Breast epithelium (tissue), 4 donors: ENCODE measurements at regions of chr2 and their contacts with region 1.

Region 1: GRCh38 chr2:143823876-143824275 is 694.7 kb downstream of the ARHGAP15 start:
- DNase-seq: no peak
- H3K4me3 ChIP-seq: no peak overlapping the region
- H3K27ac ChIP-seq: no peak overlapping the region
- H3K4me1 ChIP-seq: no peaks in the 10 kb centered on the region
- H3K27me3 ChIP-seq: no peaks in the 10 kb centered on the region
- CTCF ChIP-seq: no peak
- POLR2A ChIP-seq: no peak

Region 2: DNA sequence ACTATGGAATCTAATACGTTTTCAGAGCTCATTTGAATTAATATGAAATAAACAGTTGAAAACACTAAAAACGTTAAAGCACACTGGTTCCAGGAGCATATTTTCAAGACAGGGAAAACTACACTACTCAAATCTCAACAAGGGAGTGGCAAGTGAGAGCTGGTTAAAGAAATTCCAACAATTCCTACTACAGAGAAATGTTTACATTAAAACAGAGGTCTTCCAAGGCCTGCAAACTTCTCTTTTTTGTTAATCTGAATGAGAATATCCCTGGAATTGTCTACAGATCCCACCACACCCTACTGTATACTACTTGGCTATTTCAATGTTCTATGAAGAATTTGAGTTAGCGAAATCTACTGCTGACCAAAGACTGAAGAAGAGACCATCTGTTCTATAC is 464.6 kb after region 1 on chr2:
- intact Hi-C with region 1: loop called (anchors 10 kb)
- DNase-seq: no peak
- H3K4me3 ChIP-seq: no peak overlapping the region
- H3K27ac ChIP-seq: no peak overlapping the region
- H3K4me1 ChIP-seq: no peaks in the 10 kb centered on the region
- H3K27me3 ChIP-seq: no peaks in the 10 kb centered on the region
- CTCF ChIP-seq: no peak
- POLR2A ChIP-seq: no peak